ENCODE measurements at regions of chr10 and their contacts with region 1.

Region 1: DNA sequence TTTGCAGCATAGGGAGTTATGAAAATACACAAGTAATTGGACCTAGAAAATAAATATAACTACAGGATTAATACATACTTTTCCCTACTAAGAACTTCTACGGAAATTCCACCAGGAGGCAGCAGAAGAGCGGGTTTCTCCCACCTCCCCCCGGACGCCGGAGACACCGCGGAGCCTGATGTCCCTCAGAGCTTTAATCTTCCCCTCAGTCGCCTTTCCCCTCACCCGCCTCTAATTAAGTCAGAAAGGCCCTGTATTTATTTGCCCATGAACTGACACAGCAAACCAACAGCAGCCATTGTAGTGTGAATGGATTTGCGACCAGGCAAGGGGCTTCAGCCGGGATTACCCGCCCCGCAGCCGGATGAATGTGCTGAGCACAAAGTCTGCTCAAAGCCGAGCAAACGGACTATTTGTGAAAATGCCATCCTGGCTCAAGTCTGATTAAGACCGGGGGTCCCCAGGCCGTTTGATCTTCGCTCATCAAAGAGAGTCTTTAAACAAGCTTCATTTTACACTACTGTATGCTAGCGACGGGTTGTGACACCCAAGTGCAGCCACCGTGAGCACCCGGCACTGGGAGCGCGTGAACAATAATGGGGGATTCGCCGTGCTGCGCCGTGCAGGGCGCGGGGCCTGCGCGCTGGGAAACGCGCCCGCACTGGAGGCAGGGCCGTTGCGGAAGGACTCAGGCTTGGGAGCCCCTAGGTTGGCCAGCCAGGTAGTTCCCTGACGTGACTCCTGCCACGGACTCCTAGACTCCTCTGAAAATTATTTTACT is 5.6 kb upstream of the DKK1 start:
- DNase-seq: peak; percentile 55
- H3K4me3 ChIP-seq: peak overlapping the region; percentile 56
- H3K27ac ChIP-seq: no peak overlapping the region
- H3K27me3 ChIP-seq: no peaks in the 10 kb centered on the region
- CTCF ChIP-seq: peak; percentile 77

Region 2: DNA sequence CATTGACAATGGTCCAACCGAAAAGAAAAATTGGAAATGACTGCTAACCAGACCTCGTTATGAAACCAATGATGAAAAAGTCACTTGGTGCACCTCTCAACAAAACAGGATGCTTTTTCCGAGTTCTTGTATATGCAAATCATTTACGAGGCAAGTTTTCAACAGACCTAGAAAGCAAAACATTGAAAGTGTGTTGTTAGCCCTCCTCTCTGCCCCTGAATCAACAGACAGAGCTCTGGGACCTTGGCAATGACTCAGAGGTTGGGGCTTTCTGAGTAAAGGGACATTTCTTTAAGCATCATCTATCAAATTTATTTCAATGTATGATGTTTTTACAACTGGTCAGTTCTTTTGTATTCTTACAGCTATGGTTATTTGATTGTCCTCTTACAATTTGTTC is 10.7 kb before region 1 on chr10:
- CTCF ChIA-PET with region 1: interaction called, 15 read pairs
- POLR2A ChIA-PET with region 1: no interaction called
- DNase-seq: no peak
- H3K4me3 ChIP-seq: no peak overlapping the region
- H3K27ac ChIP-seq: no peak overlapping the region
- H3K27me3 ChIP-seq: no peaks in the 10 kb centered on the region
- CTCF ChIP-seq: no peak

Region 3: DNA sequence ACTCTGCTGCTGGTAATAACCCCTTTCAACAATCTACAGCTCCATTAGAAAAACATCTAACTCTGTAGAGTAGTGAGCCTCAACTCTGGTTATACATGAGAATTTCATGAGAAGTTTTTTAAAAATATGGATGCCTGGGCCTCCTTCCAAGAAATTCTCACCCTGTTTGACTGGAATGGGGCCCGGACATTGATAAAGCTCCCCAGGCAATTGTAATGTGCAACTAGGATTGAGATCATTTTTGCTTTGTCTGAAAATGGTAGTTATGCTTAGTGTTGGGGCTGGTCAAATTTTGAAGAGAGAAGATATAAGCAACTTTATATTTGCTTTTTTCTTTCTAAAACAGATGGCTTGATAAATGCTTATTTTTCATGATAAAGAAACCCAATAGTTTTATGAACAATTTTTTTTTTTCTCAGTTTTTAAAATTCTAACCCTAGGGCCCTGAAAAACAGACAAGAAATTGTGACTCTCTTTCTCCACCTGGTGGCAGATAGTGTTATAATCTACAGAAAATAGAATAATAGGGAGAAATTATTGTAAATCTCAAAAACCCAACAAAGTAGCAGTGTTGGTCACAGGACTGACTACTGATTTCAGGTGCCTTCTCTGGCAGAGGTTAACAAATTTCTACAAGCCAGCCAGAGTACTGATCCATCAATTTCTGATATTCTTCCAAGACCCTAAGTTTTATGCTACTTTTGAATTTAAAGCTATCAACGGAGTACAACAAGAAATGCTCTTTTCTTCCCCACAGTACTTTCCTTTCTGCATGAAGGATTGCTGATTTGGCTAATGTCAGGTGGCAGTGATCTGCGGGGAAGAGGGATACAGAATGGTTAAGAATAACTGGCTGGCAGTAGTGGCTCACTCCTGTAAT is 180.4 kb after region 1 on chr10:
- CTCF ChIA-PET with region 1: interaction called, 472 read pairs
- POLR2A ChIA-PET with region 1: no interaction called
- DNase-seq: no peak
- H3K4me3 ChIP-seq: no peak overlapping the region
- H3K27ac ChIP-seq: no peak overlapping the region
- H3K27me3 ChIP-seq: no peaks in the 10 kb centered on the region
- CTCF ChIP-seq: peak; percentile 58

Region 4: GRCh38 chr10:52566471-52567246 is 258.2 kb after region 1 on chr10:
- CTCF ChIA-PET with region 1: interaction called, 222 read pairs
- POLR2A ChIA-PET with region 1: interaction called, 4 read pairs
- DNase-seq: peak; percentile 23
- H3K4me3 ChIP-seq: no peak overlapping the region
- H3K27ac ChIP-seq: no peak overlapping the region
- H3K27me3 ChIP-seq: no peaks in the 10 kb centered on the region
- CTCF ChIP-seq: peak; percentile 74

Region 5: GRCh38 chr10:52597189-52597863 is 288.9 kb after region 1 on chr10:
- CTCF ChIA-PET with region 1: interaction called, 17 read pairs
- POLR2A ChIA-PET with region 1: no interaction called
- DNase-seq: no peak
- H3K4me3 ChIP-seq: peak overlapping the region; percentile 37
- H3K27ac ChIP-seq: no peak overlapping the region
- H3K27me3 ChIP-seq: no peaks in the 10 kb centered on the region
- CTCF ChIP-seq: no peak

Region 6: DNA sequence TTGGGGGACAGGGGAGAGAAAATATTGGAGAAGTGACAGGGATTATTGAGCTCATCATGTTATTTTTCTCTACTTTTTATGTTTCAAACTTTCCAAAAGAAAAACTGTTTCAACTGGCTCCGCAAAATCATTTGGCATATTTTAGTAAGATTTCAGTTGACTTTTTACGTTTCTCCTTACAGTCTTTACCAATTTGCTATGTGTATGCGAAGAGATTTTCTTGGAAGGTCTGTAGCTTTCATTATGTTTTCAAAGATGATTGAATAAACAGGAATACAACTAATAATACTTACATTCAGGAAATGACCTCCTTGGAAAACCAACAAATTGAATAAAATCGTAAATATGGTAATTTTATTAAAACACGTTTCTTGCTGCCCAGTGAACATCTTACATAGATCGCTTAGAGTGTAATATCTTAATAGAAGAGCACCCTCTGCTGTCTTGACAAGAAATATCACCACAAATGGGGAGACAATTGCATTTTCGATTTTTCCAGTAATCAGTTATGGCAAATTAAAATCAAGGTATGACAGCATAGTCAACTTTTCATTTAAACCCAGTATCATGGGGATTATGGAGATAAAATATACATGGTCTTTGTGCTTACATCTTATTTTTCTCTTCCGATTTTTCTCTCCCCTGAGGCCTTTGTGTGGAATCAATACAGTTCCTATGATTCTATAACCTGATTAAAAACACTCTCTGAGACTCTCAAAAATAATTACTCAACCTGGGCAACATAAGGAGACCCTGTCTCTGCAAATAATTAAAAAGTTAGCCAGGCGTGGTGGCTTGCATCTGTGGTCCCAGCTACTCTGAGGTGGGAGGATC is 421.0 kb after region 1 on chr10:
- CTCF ChIA-PET with region 1: interaction called, 36 read pairs
- POLR2A ChIA-PET with region 1: no interaction called
- DNase-seq: no peak
- H3K4me3 ChIP-seq: no peak overlapping the region
- H3K27ac ChIP-seq: no peak overlapping the region
- H3K27me3 ChIP-seq: no peaks in the 10 kb centered on the region
- CTCF ChIP-seq: peak; percentile 56

Measured in AG04450 (cell line).